Uterus (tissue), 4 donors: ENCODE measurements at regions of chr7 and their contacts with region 1.

Region 1: DNA sequence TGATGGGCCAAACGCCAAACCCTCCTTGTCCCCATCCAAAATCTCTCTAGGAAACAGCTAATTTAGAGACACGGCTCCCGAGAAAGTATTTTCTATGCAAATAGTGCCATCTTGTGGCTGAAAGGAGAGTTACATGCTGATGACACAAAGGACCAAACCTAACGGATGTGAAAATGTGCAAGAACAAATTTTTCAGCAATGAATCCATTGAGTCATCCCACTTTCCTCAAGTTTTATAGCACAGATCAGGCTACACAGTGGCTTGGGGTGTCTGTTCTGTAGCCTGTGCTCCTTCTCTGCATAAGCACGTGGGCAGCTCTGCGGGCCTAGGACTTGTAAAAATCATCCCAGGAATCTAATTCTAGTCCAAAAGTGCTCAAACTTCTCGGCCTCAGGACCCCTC is 154.8 kb upstream of the PRR15 start:
- DNase-seq: peak; percentile 44 to 70
- H3K4me3 ChIP-seq: no peak overlapping the region
- H3K27ac ChIP-seq: no peak overlapping the region
- H3K4me1 ChIP-seq: no peaks in the 10 kb centered on the region
- H3K27me3 ChIP-seq: no peaks in the 10 kb centered on the region
- CTCF ChIP-seq: peak; percentile 78 to 88 (median 84)
- POLR2A ChIP-seq: no peak

Region 2: DNA sequence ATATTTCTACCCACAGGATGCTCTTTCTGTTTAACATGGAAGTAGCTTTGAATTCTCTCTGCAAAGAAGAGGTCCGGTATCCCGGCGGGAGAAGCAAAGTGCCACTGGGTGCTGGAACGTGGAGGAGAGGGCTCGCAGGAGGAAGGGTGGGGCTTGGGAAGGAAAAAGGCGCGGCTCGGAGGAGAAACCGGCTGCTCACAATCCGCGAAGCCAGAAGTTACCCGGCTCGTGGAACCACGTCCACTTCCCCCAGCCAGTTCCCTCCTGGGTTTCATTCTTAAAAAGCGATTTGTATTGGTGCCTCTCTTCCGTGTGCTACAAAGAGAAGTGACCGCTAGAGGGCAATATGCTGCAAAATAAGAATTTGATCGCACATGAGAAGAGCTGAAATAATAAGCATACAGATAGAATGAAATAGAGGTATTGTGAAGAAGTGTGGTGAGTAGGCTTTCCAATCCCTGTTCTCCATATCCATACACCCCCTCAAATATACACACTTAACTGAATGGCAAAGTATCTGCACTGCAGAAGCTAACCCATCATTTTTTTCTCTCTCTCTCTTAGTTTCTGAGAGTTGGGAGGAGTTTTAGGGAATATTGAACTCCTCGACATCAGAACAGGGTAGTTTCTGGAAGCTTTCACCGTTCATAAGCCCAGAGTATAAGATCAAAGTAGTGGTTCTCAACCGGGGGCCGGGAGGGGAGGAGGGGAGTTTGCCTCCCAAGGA is 481.8 kb before region 1 on chr7:
- intact Hi-C with region 1: loop called (anchors 2 kb)
- DNase-seq: peak; percentile 72 to 81
- H3K4me3 ChIP-seq: peak overlapping the region; percentile 45 to 48
- H3K27ac ChIP-seq: peak overlapping the region; percentile 66
- H3K4me1 ChIP-seq: peaks cover 0 to 5% of the 10 kb centered on the region in 2 donors
- H3K27me3 ChIP-seq: no peaks in the 10 kb centered on the region
- CTCF ChIP-seq: peak; percentile 76 to 90 (median 86)
- POLR2A ChIP-seq: peak in 1 of 2 donors; percentile 27

Region 3: DNA sequence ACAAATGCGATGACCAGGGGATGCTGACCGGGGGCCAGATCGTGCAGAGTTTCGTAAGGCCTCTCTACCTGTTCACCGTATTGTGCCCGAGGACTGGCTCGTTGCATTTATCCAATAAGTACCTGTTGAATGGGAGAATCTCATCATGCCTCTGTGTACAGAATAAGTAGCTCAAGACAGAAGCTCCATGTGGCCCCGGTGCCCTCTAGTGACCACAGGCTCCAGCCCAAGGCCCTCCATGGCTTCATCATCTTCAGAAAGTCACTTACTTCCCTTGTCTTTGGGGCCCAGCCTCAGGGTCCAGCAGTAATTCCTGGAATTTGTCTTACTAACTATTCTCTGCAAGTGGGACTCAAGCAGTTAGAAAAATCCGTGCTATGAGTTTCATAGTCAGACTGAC is 63.2 kb before region 1 on chr7:
- intact Hi-C with region 1: no loop called
- DNase-seq: peak in 1 of 2 donors; percentile 25
- H3K4me3 ChIP-seq: no peak overlapping the region
- H3K27ac ChIP-seq: no peak overlapping the region
- H3K4me1 ChIP-seq: no peaks in the 10 kb centered on the region
- H3K27me3 ChIP-seq: no peaks in the 10 kb centered on the region
- CTCF ChIP-seq: peak in 1 of 4 experiments; percentile 26
- POLR2A ChIP-seq: no peak